Posterior vena cava (tissue), 2 donors: ENCODE measurements at regions of chr2 and their contacts with region 1.

Region 1: GRCh38 chr2:177868806-177869205 is 203.8 kb downstream of the PDE11A start:
- DNase-seq: no peak

Region 2: DNA sequence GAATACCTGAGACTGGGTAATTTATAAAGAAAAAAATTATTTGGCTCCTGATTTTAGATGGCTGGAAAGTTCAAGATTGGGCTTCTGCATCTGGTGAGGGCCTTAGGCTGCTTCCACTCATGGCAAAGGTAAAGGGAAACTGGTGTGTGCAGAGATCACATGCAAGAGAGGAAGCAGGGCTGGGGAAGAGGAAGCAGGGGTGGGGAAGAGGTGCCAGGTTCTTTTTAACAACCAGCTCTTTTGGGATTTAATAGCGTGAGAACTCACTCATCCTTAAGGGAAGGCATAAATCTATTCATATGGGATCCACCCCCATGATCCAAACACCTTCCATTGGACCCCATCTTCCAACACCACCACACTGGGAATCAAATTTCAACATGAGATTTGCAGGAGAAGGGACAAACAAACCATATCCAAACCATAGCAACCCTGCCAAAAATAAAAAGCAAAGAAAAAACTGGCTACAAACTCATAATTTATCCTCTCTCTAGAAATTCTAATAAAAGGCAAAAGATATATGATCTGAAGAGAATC is 551.7 kb after region 1 on chr2:
- intact Hi-C with region 1: loop called in 1 of 2 experiments (anchors 5 kb)
- DNase-seq: no peak

Region 3: GRCh38 chr2:179487010-179487731 is 1618.4 kb after region 1 on chr2:
- intact Hi-C with region 1: no loop called
- DNase-seq: no peak